Left ventricle myocardium inferior (tissue), 1 donor: ENCODE measurements at regions of chr5 and their contacts with region 1.

Region 1: GRCh38 chr5:136802383-136802782 is 437.0 kb upstream of the TRPC7 start:
- DNase-seq: no peak
- H3K4me3 ChIP-seq: no peak overlapping the region
- H3K27ac ChIP-seq: no peak overlapping the region
- H3K4me1 ChIP-seq: no peaks in the 10 kb centered on the region
- H3K27me3 ChIP-seq: no peaks in the 10 kb centered on the region
- CTCF ChIP-seq: peak; percentile 56

Region 2: GRCh38 chr5:136396886-136397285 is 405.5 kb before region 1 on chr5:
- intact Hi-C with region 1: no loop called
- DNase-seq: no peak
- H3K4me3 ChIP-seq: no peak overlapping the region
- H3K27ac ChIP-seq: no peak overlapping the region
- H3K4me1 ChIP-seq: no peaks in the 10 kb centered on the region
- H3K27me3 ChIP-seq: peaks cover 68% of the 10 kb centered on the region
- CTCF ChIP-seq: no peak

Region 3: GRCh38 chr5:137051165-137051564 is 248.8 kb after region 1 on chr5:
- intact Hi-C with region 1: loop called (anchors 10 kb)
- DNase-seq: no peak
- H3K4me3 ChIP-seq: no peak overlapping the region
- H3K27ac ChIP-seq: no peak overlapping the region
- H3K4me1 ChIP-seq: no peaks in the 10 kb centered on the region
- H3K27me3 ChIP-seq: no peaks in the 10 kb centered on the region
- CTCF ChIP-seq: peak; percentile 60

Region 4: GRCh38 chr5:137234973-137235943 is 432.9 kb after region 1 on chr5:
- intact Hi-C with region 1: no loop called
- DNase-seq: no peak
- H3K4me3 ChIP-seq: no peak overlapping the region
- H3K27ac ChIP-seq: no peak overlapping the region
- H3K4me1 ChIP-seq: no peaks in the 10 kb centered on the region
- H3K27me3 ChIP-seq: peaks cover 16% of the 10 kb centered on the region
- CTCF ChIP-seq: no peak